Gastrocnemius medialis (tissue), 4 donors: ENCODE measurements at regions of chr3 and their contacts with region 1.

Region 1: GRCh38 chr3:32177702-32178198 is 60.7 kb upstream of the CMTM8 start:
- DNase-seq: peak; percentile 18 to 31
- ATAC-seq: peak; percentile 69 to 75
- H3K4me3 ChIP-seq: no peak overlapping the region
- H3K27ac ChIP-seq: no peak overlapping the region
- H3K4me1 ChIP-seq: no peaks in the 10 kb centered on the region
- H3K27me3 ChIP-seq: no peaks in the 10 kb centered on the region
- CTCF ChIP-seq: peak; percentile 54 to 66 (median 61)
- POLR2A ChIP-seq: no peak

Region 2: GRCh38 chr3:32238453-32239306 is 60.9 kb after region 1 on chr3 and contains the start of gene CMTM8:
- in situ Hi-C with region 1: no loop called
- intact Hi-C with region 1: loop called (anchors 2 kb)
- DNase-seq: no peak
- ATAC-seq: peak; percentile 35 to 60
- H3K4me3 ChIP-seq: peak within 1 kb of the TSS; percentile 60 to 79 (median 65)
- H3K27ac ChIP-seq: peak within 1 kb of the TSS; percentile 43 to 82 (median 78)
- H3K4me1 ChIP-seq: peaks cover 0 to 5% of the 10 kb centered on the region in 2 donors
- H3K27me3 ChIP-seq: peaks cover 7 to 31% (median 8%) of the 10 kb centered on the region in 3 donors
- CTCF ChIP-seq: no peak
- POLR2A ChIP-seq: peak; percentile 20 to 21
- total RNA-seq, gene CMTM8: 1.4 to 4.1 (median 2.9) TPM

Region 3: GRCh38 chr3:32296256-32297204 is 118.8 kb after region 1 on chr3:
- in situ Hi-C with region 1: no loop called
- intact Hi-C with region 1: loop called (anchors 10 kb)
- DNase-seq: peak; percentile 19 to 28
- ATAC-seq: peak; percentile 51 to 63
- H3K4me3 ChIP-seq: no peak overlapping the region
- H3K27ac ChIP-seq: no peak overlapping the region
- H3K4me1 ChIP-seq: no peaks in the 10 kb centered on the region
- H3K27me3 ChIP-seq: no peaks in the 10 kb centered on the region
- CTCF ChIP-seq: peak; percentile 61 to 90 (median 75)
- POLR2A ChIP-seq: no peak

Region 4: DNA sequence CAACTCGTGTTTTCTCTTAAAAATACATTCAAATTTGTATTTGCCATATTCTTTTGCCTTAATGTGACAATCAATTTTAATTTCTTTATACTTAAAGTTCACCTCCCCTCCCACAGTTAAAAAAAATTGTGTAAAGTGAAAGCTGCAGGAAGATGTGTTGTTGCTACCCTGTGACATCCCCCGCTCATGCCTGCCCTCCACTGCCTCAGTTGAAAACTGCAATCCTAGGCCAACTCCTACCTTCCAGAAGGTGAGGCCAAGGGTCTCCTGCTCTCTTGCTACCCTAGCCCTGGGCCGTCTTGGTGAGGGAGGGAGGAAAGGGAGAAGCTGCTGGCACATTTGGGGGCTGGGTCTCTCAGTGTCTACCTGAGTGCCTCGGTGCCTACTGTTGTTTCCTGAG is 156.9 kb after region 1 on chr3:
- in situ Hi-C with region 1: no loop called
- intact Hi-C with region 1: loop called (anchors 10 kb)
- DNase-seq: no peak
- ATAC-seq: no peak
- H3K4me3 ChIP-seq: no peak overlapping the region
- H3K27ac ChIP-seq: no peak overlapping the region
- H3K4me1 ChIP-seq: no peaks in the 10 kb centered on the region
- H3K27me3 ChIP-seq: no peaks in the 10 kb centered on the region
- CTCF ChIP-seq: no peak
- POLR2A ChIP-seq: no peak